MCF 10A (cell line): ENCODE measurements at regions of chr11 and their contacts with region 1.

Region 1: DNA sequence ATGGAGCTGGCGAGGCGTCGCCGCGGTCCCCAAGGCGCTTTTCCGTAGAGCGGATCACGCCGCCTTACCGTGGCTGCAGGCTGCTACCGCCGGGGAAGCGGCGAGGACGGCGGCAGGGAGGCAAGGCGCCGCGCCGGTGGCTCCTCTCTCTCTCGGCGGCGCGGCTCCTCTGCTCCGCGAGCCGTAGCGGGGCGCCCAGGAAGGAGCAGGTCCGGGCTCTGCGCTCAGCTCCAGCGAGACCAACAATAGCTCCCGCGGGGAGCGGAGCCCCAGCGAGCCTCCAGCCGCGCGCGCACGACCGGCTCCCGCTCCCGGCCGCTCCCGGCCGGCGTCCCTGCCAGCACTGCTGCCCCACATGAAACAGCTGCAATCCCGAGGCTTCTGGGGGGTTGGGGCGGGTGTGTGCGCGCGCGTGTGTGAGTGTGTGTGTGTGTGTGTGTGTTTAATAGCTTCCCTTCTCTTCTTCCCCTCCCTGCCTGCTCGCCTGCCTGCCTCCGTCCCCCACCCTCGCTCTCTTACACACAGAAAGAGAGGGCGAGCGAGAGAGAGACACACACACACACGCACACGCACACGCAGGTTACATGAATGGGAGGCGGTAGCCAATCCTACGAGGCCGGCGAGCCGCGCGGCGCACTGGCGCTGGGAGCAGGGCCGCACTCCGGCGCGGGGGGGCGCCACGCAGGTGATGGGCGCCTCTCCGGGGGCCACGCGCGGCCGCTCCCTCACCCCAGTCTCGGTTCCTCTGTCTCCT is at the start of gene TENM4:
- DNase-seq: peak; percentile 61
- H3K4me3 Mint-ChIP-seq: peak within 1 kb of the TSS; percentile 73
- H3K27ac Mint-ChIP-seq: no peak within 1 kb of the TSS
- H3K4me1 Mint-ChIP-seq: peaks cover 28% of the 10 kb centered on the region
- H3K27me3 Mint-ChIP-seq: no peaks in the 10 kb centered on the region
- CTCF ChIP-seq: peak; percentile 37
- total RNA-seq, gene TENM4: 5.0 and 9.9 TPM in 2 replicates

Region 2: GRCh38 chr11:79371152-79371551 is 69.5 kb before region 1 on chr11:
- CTCF ChIA-PET with region 1: interaction called, 10 read pairs
- POLR2A ChIA-PET with region 1: interaction called, 7 read pairs
- intact Hi-C with region 1: no loop called
- DNase-seq: peak; percentile 20
- H3K4me3 Mint-ChIP-seq: no peak overlapping the region
- H3K27ac Mint-ChIP-seq: no peak overlapping the region
- H3K4me1 Mint-ChIP-seq: peaks cover 14% of the 10 kb centered on the region
- H3K27me3 Mint-ChIP-seq: no peaks in the 10 kb centered on the region
- CTCF ChIP-seq: no peak

Region 3: GRCh38 chr11:79413268-79413667 is 27.4 kb before region 1 on chr11:
- CTCF ChIA-PET with region 1: interaction called, 20 read pairs
- POLR2A ChIA-PET with region 1: interaction called, 15 read pairs
- intact Hi-C with region 1: no loop called
- DNase-seq: peak; percentile 91
- H3K4me3 Mint-ChIP-seq: no peak overlapping the region
- H3K27ac Mint-ChIP-seq: no peak overlapping the region
- H3K4me1 Mint-ChIP-seq: peaks cover 45% of the 10 kb centered on the region
- H3K27me3 Mint-ChIP-seq: no peaks in the 10 kb centered on the region
- CTCF ChIP-seq: no peak

Region 4: DNA sequence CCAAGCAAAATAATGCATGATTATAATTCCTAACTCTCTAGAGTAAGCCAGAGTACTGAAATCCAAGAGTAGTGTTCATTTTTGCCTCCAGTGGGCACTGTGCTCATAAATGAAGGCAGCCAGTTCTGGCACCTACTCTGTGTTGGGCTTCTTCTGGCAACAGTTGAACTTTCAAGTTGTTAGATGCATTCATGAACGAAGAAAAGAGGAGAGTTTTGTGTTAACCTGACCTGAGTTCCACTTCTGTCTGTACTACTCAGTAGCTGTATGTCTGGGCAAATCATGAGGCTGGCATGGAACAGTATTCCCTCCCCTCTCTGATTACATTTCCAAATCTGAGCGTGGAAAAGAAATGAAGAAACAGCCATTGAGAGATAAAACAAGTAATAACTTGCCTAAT is 20.5 kb after region 1 on chr11:
- CTCF ChIA-PET with region 1: interaction called, 11 read pairs
- POLR2A ChIA-PET with region 1: interaction called, 5 read pairs
- intact Hi-C with region 1: no loop called
- DNase-seq: peak; percentile 63
- H3K4me3 Mint-ChIP-seq: peak overlapping the region; percentile 12
- H3K27ac Mint-ChIP-seq: peak overlapping the region; percentile 37
- H3K4me1 Mint-ChIP-seq: peaks cover 6% of the 10 kb centered on the region
- H3K27me3 Mint-ChIP-seq: no peaks in the 10 kb centered on the region
- CTCF ChIP-seq: peak; percentile 51

Region 5: DNA sequence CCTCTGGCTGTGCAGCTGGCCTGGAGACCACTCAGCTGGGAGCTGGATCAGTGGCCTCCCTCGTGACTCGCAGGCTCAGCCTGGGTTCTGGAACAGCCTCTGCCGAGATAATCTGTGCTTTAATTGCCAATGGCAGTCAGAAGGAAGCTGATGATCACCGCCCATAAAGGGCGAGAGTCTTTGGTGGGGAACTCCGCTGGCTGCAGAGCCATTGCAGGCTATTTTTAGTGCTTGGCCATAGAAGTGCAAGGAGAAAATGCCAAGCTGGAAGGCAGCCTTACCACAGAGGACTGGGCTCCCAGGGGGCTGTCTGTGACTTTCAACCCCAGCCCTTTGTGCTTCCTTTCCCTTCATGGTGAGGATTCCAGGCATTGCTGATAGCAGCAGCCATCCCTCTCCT is 62.4 kb after region 1 on chr11:
- CTCF ChIA-PET with region 1: interaction called, 10 read pairs
- POLR2A ChIA-PET with region 1: no interaction called
- intact Hi-C with region 1: no loop called
- DNase-seq: no peak
- H3K4me3 Mint-ChIP-seq: no peak overlapping the region
- H3K27ac Mint-ChIP-seq: no peak overlapping the region
- H3K4me1 Mint-ChIP-seq: peaks cover 12% of the 10 kb centered on the region
- H3K27me3 Mint-ChIP-seq: no peaks in the 10 kb centered on the region
- CTCF ChIP-seq: no peak